ENCODE measurements at regions of chr20 and their contacts with region 1.

Region 1: DNA sequence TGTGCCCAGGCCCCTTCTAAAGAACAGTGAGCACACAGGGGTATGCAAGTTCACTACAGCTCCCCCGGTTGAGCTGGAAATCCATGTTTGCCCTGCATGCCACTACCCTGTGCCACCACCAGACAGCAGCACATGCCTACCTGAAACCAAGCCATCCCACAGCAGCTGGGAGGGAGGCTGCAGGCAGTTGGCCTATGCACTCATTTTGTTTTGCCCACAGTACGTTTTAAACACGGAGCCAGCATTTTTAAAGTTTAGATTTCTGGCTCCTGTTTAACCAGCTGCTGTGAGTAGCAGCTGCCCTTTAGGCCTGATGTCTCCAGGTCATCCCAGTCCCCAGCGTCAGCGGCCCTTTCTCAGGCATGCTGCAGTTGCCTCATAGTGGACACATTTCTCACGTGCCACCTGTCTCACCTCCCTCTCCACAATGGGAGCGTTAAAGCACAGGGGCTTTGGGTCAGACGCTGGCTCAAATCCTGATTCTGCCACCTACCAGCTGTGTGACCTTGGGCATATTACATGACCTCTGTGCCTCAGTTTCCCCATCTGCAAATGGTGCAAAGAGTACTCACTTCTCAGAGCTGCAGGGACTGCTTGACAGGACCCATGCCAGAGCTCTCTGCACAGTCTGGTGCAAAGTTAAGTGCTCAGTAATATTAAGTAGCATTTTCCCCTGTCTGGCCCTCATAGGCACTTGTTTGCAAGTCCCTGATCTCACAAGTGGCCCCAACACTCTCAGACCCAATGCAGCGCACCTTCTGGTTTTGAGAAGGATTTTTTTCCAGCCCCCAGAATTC is 8.1 kb upstream of the UBE2V1 start:
- DNase-seq: peak; percentile 75
- H3K4me3 ChIP-seq: no peak overlapping the region
- H3K27ac ChIP-seq: peak overlapping the region in 3 of 4 donors; percentile 2 to 35 (median 25)
- H3K4me1 ChIP-seq: peaks cover 3 to 13% (median 12%) of the 10 kb centered on the region in 4 donors
- H3K27me3 ChIP-seq: no peaks in the 10 kb centered on the region
- CTCF ChIP-seq: peak; percentile 83 to 97 (median 89)
- EP300 ChIP-seq: no peak
- POLR2A ChIP-seq: peak; percentile 5

Region 2: DNA sequence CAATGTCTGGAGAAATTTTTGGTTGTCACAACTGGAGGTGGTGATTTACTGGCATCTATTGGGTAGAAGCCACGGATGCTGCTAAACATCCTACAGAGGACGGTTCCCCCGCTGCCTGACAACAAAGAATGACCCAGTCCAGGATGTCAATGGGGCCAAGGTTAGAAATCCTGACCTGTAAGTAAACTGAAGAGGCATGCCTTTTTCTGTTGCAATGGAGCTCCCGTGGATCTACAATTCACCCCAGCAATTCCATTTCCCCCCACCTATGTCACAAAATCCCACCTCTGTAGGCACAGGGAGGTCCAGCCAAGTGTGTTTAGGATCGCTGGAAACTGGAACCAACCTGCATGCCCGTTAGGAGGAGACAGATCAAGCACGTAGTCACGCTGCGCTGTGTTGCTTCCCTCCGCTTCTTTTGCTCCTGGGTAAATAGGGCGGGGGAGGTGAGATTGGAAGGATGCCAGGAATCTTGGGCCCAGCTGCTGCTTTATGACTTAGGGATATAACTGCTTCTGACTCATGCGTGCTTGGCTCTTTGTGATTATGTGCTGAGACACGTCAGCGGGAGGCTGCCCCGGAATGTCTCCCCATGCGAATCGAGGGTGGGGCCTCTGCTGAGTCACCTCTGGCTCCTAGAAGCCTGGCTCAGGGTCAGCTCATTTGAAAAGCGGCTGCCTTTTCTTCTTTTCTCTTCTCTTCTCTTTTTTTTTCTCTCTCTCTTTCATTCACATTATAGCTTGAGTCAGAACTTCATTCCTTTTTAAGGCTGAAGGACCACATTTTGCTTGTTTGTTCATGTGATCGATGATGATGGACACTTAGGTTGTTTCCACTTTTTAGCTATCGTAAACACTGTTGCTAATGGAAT is 44.8 kb after region 1 on chr20:
- in situ Hi-C with region 1: loop called in 1 of 4 experiments (anchors 5 kb)
- intact Hi-C with region 1: loop called (anchors 1 kb)
- DNase-seq: peak; percentile 98
- H3K4me3 ChIP-seq: peak overlapping the region in 2 of 4 donors; percentile 20 to 43
- H3K27ac ChIP-seq: peak overlapping the region; percentile 83 to 86 (median 84)
- H3K4me1 ChIP-seq: peaks cover 10 to 24% (median 16%) of the 10 kb centered on the region in 4 donors
- H3K27me3 ChIP-seq: no peaks in the 10 kb centered on the region
- CTCF ChIP-seq: no peak
- EP300 ChIP-seq: peak; percentile 76
- POLR2A ChIP-seq: peak; percentile 14

Measured in transverse colon (tissue), 4 donors.